ENCODE measurements at regions of chr14 and their contacts with region 1.

Region 1: DNA sequence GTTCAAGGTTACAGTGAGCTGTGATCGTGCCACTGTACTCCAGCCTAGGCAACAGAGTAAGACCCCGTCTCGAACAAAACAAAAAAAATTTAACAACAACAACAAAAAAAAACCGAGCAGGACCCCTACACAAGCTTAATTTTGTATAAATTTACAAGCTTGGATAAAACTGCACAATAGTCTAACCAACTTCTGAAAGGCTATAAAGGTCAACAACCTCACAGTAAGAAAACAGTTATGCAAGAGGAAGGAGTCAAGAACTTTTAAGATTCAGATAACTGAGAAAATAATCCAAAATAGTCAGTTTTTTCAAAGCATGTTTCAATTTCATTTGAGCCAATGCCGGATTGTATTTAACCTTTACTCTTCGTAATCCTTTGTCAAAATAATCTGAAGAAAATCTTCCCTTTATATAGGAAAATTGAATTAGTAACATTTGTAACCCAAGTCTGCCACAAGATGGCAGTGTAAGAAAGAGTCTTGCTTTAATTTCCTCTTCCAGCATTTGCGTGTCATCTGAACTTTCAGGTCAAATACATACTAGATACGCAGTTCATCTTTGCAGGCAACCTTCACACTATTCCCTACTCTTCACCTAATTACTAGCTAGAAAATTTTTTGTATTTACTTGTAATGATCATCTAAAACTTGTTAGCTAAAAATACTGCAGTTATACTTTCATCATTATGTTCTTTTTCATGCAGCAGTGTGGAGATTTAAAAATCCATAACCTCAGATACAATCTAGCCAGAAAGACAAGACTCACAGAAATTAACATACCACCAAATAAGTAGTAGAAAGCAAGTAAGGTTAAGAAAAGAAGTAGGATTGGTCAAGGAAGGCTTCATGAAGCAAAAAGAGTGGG is 5.8 kb downstream of the CCNB1IP1 start:
- DNase-seq: peak; percentile 54
- H3K4me3 ChIP-seq: no peak overlapping the region
- H3K27ac ChIP-seq: no peak overlapping the region
- H3K27me3 ChIP-seq: no peaks in the 10 kb centered on the region
- CTCF ChIP-seq: peak; percentile 72

Region 2: DNA sequence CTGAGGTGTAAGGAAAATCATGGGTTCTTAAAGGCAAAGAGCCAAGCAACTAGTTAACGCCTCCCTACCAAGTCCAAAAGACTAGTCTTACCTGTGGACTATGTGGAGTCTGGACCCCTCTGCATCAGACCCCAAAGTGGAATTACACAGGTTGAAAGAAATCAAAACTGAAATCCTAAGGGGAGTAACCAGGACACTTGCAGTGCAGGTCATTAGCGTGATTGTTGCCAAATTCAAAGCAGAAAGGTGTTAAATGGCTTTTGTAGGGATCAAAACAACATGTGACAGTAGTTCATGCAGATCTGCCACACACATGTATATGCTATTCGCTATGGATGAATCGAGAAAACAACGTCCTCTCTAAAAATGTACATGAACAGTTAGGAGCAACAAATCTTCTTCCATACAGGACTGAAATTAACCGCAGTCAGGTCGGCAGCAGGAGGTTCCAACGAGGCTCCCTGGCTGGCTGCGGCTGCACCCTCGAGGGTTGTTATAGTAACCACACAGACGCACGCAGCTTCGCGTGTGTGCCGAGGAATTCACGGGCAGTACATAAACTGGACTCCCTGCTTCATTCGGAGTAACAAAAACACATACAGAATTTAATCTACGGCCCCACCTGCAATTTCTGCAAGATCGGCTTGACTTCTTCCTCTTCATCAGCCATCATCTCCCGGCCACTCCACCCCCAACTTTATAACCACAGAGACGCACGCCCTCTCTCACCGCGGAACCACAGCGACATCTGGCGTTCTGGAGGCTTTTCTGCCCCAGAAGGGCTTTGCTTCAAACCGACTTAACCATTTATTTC is 21.8 kb before region 1 on chr14 and contains the start of gene TTC5:
- CTCF ChIA-PET with region 1: interaction called, 23 read pairs
- POLR2A ChIA-PET with region 1: no interaction called
- DNase-seq: peak; percentile 81
- H3K4me3 ChIP-seq: peak within 1 kb of the TSS; percentile 70
- H3K27ac ChIP-seq: no peak within 1 kb of the TSS
- H3K27me3 ChIP-seq: no peaks in the 10 kb centered on the region
- CTCF ChIP-seq: peak; percentile 97
- polyA plus RNA-seq, gene TTC5: 20.0 and 23.5 TPM in 2 replicates

Region 3: GRCh38 chr14:20350860-20351259 is 23.6 kb after region 1 on chr14:
- CTCF ChIA-PET with region 1: interaction called, 76 read pairs
- POLR2A ChIA-PET with region 1: no interaction called
- DNase-seq: no peak
- H3K4me3 ChIP-seq: no peak overlapping the region
- H3K27ac ChIP-seq: no peak overlapping the region
- H3K27me3 ChIP-seq: no peaks in the 10 kb centered on the region
- CTCF ChIP-seq: peak; percentile 35

Region 4: DNA sequence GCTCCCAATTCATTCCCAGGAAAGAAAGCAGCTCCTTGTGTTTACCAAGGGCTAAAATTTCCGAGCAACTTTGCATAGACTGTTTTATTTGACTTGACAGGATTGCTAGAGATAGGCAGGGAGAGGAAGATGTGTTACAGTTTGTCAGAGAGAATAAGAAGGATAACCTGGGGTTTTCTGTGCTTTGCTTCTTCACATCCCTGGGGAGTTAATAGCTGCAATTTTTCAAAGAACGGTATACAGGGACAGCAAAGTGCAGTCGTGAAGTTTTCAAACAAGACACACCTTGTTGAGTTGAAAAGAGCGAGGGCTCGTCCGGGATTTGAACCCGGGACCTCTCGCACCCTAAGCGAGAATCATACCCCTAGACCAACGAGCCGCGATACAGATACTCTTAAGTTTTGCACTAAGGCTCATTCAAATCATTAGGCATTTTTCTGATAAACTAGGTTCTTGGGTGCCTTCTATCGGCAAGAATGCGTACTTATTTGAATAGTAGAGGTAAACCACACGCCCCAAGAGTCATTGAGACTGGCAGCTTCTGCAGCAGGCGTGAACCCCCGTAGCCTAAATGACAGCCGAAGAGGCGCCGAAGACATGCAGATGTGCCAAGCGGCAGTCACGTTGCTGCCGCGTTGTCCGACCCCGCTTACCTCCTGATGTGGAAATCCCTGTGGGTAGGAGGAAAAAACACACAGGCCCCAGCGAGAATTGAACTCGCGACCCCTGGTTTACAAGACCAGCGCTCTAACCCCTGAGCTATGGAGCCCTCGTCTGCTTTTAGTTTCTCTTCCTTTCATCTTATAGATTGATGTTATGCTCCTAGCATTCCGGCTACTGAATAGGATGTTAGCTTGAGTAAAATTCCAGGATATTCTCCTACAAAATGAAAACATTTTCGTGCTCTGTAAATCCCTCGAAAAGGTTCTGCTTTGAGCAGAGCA is 286.1 kb after region 1 on chr14:
- CTCF ChIA-PET with region 1: interaction called, 71 read pairs
- POLR2A ChIA-PET with region 1: no interaction called
- DNase-seq: peak; percentile 97
- H3K4me3 ChIP-seq: peak overlapping the region; percentile 70
- H3K27ac ChIP-seq: peak overlapping the region; percentile 42
- H3K27me3 ChIP-seq: no peaks in the 10 kb centered on the region
- CTCF ChIP-seq: peak; percentile 76

Region 5: DNA sequence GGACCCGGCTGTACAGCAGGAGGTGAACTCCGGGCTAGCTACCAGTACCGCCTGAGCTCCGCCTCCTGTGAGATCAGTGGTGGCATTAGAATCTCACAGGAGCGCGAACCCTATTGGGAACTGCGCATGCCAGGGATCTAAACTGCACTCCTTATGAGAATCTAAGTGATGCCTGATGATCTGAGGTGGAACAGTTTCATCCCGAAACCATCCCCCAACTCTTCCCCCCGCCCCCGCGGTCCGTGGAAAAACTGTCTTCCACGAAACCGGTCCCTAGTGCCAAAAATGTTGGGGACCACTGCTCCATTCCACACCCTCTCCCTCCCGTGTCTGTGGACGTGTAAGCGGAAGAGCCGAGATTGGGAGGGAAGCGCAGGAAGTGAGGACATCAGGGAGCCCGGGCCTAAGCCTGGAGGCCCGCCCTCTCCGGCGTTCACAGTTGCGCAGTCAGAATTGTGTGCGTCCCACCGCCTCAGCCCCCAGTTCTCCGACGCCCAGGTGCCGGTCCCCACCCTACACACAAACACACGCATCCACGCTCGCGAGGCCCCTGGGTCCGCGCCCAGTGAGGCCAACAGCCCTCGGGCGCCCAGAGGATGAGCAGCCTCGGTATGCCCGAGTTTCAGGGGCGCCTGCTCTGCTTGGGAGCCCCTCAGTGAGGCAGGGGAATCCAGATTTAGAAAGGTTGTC is 355.3 kb after region 1 on chr14:
- CTCF ChIA-PET with region 1: interaction called, 12 read pairs
- POLR2A ChIA-PET with region 1: no interaction called
- DNase-seq: no peak
- H3K4me3 ChIP-seq: peak overlapping the region; percentile 86
- H3K27ac ChIP-seq: peak overlapping the region; percentile 99
- H3K27me3 ChIP-seq: no peaks in the 10 kb centered on the region
- CTCF ChIP-seq: 0 out of 2 replicates have a peak, but pooled peaks have one; percentile 14

Region 6: DNA sequence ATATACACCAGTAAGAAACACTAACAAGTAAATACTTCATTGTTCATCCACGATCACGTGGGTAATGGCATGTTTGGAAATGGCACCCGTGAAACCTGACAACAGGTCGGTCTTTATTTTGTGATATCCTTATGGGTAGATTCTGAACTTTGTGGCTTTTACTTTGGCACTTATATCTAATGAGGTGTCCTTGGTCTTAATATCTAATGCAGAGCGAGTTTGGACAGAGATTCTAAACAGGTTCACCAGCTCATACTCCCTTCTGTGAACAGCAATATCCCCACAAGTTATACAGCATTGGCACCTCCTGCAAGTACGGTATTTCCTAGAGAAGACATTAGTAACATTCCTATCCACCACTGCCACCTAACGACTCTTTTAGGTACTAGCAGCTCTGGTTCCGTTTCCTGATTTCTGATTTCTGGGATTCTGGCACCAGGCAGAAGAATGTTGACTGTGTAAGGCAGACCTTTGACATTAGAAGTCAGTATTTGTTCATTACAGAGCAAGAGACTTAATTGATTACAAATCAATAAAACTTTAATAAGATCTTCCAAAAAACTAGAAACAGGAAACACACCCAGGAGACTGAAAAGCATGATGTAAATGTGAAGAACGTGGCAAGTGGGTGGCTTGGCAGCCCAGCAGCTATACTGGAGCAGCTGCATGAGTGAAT is 363.7 kb after region 1 on chr14:
- CTCF ChIA-PET with region 1: interaction called, 18 read pairs
- POLR2A ChIA-PET with region 1: no interaction called
- DNase-seq: no peak
- H3K4me3 ChIP-seq: no peak overlapping the region
- H3K27ac ChIP-seq: no peak overlapping the region
- H3K27me3 ChIP-seq: no peaks in the 10 kb centered on the region
- CTCF ChIP-seq: peak; percentile 91

Measured in AG04450 (cell line).